ENCODE measurements at regions of chr19 and their contacts with region 1.

Region 1: GRCh38 chr19:17069218-17069617 is 6.0 kb downstream of the HAUS8 start:
- DNase-seq: no peak
- H3K4me3 ChIP-seq: no peak overlapping the region
- H3K4me3 Mint-ChIP-seq: no peak overlapping the region
- H3K27ac Mint-ChIP-seq: no peak overlapping the region
- H3K4me1 ChIP-seq: no peaks in the 10 kb centered on the region
- H3K4me1 Mint-ChIP-seq: peaks cover 6% of the 10 kb centered on the region
- H3K27me3 ChIP-seq: no peaks in the 10 kb centered on the region
- H3K27me3 Mint-ChIP-seq: no peaks in the 10 kb centered on the region
- CTCF ChIP-seq: no peak

Region 2: DNA sequence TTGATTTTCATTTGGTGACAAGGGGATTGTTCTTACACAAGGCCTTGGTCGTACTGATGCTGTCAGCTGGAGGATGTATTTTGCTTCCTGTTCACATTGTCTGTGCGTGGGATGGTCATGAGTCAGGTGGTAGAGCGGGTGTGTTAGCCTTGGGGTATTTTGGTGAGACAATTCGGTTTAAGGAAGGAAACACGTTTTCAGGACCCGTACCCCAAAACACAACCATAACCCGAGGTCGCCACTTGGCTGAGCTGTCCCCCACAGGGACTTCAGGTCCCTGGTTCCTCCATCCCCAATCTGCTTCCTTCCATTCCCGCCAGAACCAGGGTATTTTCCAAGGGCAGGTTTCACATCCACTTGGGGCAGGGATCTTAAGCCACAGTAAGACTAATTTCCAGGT is 21.4 kb after region 1 on chr19:
- CTCF ChIA-PET with region 1: no interaction called
- POLR2A ChIA-PET with region 1: no interaction called
- intact Hi-C with region 1: no loop called
- DNase-seq: no peak
- H3K4me3 ChIP-seq: no peak overlapping the region
- H3K4me3 Mint-ChIP-seq: no peak overlapping the region
- H3K27ac Mint-ChIP-seq: peak overlapping the region; percentile 75
- H3K4me1 ChIP-seq: no peaks in the 10 kb centered on the region
- H3K4me1 Mint-ChIP-seq: peaks cover 18% of the 10 kb centered on the region
- H3K27me3 ChIP-seq: no peaks in the 10 kb centered on the region
- H3K27me3 Mint-ChIP-seq: no peaks in the 10 kb centered on the region
- CTCF ChIP-seq: no peak

Region 3: DNA sequence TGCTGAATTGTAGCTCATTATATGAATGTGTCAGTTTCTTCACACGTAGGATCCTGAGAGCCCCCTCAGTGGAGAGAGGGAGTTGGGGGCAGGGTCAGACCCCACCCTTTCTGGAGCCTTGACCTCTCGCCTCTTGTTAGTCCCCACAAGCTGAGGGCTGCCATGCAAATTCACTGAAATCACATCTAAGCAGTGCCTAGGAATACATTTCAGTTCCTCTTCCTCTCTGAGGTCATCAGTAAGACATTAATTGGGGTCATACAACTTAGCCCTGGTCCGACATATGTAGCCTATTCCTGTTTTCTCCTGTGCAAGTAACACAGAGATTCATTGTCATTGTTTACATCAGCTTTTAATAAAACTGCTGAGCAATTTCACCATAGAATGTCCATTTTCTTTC is 36.3 kb after region 1 on chr19:
- CTCF ChIA-PET with region 1: no interaction called
- POLR2A ChIA-PET with region 1: no interaction called
- intact Hi-C with region 1: loop called (anchors 2 kb)
- DNase-seq: no peak
- H3K4me3 ChIP-seq: no peak overlapping the region
- H3K4me3 Mint-ChIP-seq: no peak overlapping the region
- H3K27ac Mint-ChIP-seq: no peak overlapping the region
- H3K4me1 ChIP-seq: no peaks in the 10 kb centered on the region
- H3K4me1 Mint-ChIP-seq: no peaks in the 10 kb centered on the region
- H3K27me3 ChIP-seq: no peaks in the 10 kb centered on the region
- H3K27me3 Mint-ChIP-seq: no peaks in the 10 kb centered on the region
- CTCF ChIP-seq: no peak

Measured in Caco-2 (cell line).